GM18951 (cell line): ENCODE measurements at regions of chr15 and their contacts with region 1.

Region 1: DNA sequence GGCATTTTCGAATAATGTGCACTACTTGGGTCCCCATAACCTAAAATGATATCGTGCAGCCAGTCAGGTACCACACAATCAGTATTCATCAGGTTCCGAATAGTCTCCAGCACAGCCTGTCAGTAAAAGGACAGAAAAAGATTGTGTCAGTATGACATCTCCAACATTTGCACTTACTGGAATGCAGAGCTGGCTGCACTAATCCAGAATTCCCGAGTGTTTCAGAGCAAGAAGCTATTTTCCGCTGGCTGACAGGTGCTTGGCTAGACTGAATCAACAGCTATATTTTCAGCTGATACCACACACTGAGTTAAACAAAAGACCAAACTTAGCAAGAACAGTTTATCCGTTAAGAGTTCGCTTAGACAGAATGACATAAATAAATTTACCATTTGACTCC is 68.8 kb downstream of the AQR start:
- POLR2A ChIP-seq: no peak

Region 2: DNA sequence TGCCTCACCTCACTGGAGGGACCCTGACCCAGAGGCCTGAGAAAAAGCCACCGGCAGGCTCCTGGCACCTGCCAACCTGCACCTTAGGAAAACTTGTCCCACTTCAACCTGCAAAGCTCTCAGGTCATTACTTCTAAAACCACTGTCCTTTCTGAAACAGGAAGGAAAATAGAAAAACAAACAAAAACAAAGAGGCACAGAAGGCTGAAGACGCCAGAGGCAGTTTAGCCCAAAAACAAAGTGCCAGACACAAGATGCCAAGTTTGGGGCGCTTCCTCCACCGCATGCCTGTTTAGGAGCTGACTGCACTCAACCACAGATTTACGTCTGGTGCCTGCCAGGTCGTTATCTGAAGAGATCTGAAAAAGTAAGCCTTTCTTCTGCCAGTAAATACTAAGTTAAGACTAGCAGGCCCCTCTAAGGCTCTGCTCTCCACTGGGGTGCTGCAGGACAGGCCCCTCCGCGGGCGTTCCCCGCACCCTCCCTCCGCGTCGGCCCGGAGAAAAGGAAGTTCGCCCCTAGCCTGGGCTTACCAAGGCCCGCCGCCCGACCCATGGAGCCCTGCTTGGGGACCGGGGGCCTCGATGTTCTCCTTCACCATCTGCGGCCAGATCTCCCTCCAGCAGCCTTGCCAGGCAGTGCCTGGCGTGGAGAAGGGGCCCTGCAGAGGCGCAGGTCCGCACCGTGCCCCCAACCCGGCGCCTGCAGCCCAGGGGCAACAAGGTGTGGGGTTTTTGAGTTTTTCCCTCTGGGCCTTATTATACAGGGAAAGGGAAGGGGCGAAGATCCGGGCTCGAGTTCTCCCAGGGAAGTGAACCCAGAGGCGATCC is 464.4 kb before region 1 on chr15:
- in situ Hi-C with region 1: no loop called
- POLR2A ChIP-seq: no peak

Region 3: DNA sequence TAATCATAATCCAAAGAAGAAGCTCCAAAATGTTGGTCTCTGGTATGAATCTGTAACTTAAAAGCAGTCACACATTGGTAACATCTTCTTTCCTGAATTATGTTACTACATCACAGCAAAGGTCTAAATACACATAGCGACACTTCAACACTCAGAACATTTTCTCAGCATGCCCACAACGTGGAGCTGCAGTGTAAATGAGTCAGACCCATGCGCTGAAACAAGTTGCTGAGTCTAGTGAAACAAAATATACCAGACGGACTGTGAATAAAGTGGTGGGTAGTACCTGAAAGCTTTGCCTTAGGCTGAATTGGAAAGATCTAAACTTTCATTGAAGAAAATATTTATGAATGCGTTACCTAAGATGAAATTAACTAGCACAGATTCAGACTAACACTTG is 284.1 kb before region 1 on chr15:
- in situ Hi-C with region 1: loop called (anchors 25 kb)
- POLR2A ChIP-seq: no peak

Region 4: DNA sequence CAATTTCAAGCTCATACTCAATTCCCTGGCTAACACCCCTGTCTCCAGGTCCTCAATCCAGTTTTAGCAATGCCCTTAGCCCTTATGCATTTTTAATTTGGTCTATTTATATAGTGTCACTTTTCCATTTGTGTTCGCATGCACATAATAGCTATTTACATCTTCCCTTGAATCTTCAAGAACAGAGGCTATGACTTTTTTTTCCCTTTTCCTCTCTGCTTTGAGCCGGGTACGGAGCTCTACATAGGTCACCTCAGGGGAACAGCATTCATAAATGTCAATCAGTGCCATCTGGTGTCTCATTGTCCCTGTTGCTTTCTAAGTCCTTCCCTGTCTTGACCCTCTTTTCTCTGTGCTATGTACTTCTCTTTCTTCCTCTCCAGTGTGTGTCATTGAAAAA is 78.9 kb before region 1 on chr15:
- in situ Hi-C with region 1: no loop called
- POLR2A ChIP-seq: no peak

Region 5: GRCh38 chr15:35003928-35004327 is 103.2 kb after region 1 on chr15:
- in situ Hi-C with region 1: no loop called
- POLR2A ChIP-seq: no peak